WTC11 (cell line): ENCODE measurements at regions of chr12 and their contacts with region 1.

Region 1: GRCh38 chr12:57462251-57462911 is 2.8 kb downstream of the GLI1 start:
- DNase-seq: peak; percentile 96
- ATAC-seq: peak; percentile 59
- H3K4me3 Mint-ChIP-seq: peak overlapping the region; percentile 96
- H3K27ac Mint-ChIP-seq: peak overlapping the region; percentile 100
- H3K4me1 Mint-ChIP-seq: peaks cover 25% of the 10 kb centered on the region
- H3K27me3 Mint-ChIP-seq: peaks cover 9% of the 10 kb centered on the region
- CTCF ChIP-seq: peak; percentile 81

Region 2: DNA sequence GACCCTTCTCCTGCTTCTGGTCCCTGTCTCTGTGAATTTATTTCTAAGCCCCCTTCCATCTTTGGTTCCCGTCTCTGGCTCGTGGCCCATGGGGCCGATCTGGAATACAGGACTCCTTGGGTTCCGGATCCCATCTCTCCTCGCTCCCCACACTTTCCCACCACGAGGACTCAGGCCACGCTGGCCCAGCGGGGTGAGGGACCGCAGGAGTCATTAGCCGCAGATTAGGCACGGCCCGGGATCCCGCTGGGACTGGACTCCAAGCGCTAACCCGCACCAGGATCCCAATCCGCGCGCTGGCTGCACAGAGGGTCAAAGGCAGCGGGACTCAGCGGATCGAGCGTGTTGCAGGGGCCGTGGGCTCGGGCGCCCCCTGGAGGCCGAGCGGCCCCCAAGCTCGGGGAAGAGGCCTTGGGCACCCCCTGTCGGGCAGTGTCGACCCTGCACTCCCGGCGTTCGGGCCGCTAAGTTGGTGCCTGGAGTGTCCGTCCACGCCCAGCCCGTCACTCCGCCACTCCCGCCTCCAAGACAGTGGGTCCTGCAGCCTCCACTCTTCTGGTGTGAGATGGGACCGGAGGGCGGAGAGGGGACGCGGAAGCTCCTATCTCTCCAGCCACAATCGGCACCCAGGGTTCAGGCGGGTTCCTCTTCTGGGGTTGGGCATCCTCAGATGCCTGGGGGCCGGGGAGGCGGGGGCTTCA is 223.4 kb before region 1 on chr12:
- CTCF ChIA-PET with region 1: interaction called, 34 read pairs
- POLR2A ChIA-PET with region 1: interaction called, 5 read pairs
- DNase-seq: peak; percentile 90
- ATAC-seq: peak; percentile 10
- H3K4me3 Mint-ChIP-seq: peak overlapping the region; percentile 84
- H3K27ac Mint-ChIP-seq: no peak overlapping the region; the same call in 1 of the 2 replicates
- H3K4me1 Mint-ChIP-seq: peaks cover 66% of the 10 kb centered on the region
- H3K27me3 Mint-ChIP-seq: peaks cover 89% of the 10 kb centered on the region
- CTCF ChIP-seq: peak; percentile 100

Region 3: DNA sequence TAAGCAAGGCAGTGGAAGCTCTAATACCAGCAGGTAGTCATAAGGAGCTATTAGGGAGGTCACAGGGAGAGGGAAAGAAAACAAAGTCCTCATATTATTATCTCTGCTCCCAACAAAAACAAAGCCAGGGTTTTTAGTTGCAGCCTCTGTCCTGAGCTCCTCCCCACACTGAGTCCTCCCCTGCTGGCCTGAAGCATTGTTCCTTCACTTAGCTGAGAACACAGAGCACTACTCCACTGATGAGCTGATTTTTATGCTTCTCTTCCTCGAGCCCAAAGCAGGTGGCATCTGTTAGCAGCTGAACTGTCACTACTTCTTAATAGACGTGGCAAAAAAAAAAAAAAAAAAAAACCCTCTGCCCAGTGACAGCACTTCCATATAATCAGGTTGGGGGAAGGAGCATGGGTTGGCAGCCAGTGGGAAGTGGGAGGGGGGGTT is 200.9 kb before region 1 on chr12:
- CTCF ChIA-PET with region 1: interaction called, 15 read pairs
- POLR2A ChIA-PET with region 1: no interaction called
- DNase-seq: no peak
- ATAC-seq: peak; percentile 73
- H3K4me3 Mint-ChIP-seq: no peak overlapping the region
- H3K27ac Mint-ChIP-seq: no peak overlapping the region
- H3K4me1 Mint-ChIP-seq: peaks cover 12% of the 10 kb centered on the region
- H3K27me3 Mint-ChIP-seq: no peaks in the 10 kb centered on the region
- CTCF ChIP-seq: no peak

Region 4: GRCh38 chr12:57299514-57300016 is 162.8 kb before region 1 on chr12:
- CTCF ChIA-PET with region 1: interaction called, 18 read pairs
- POLR2A ChIA-PET with region 1: interaction called, 3 read pairs
- DNase-seq: no peak
- ATAC-seq: peak; percentile 62; the same call in 1 of the 2 replicates
- H3K4me3 Mint-ChIP-seq: no peak overlapping the region
- H3K27ac Mint-ChIP-seq: peak overlapping the region; percentile 32
- H3K4me1 Mint-ChIP-seq: peaks cover 15% of the 10 kb centered on the region
- H3K27me3 Mint-ChIP-seq: no peaks in the 10 kb centered on the region
- CTCF ChIP-seq: no peak

Region 5: GRCh38 chr12:57340104-57340503 is 122.3 kb before region 1 on chr12:
- CTCF ChIA-PET with region 1: interaction called, 25 read pairs
- POLR2A ChIA-PET with region 1: no interaction called
- DNase-seq: no peak
- ATAC-seq: no peak
- H3K4me3 Mint-ChIP-seq: no peak overlapping the region
- H3K27ac Mint-ChIP-seq: no peak overlapping the region
- H3K4me1 Mint-ChIP-seq: peaks cover 25% of the 10 kb centered on the region
- H3K27me3 Mint-ChIP-seq: no peaks in the 10 kb centered on the region
- CTCF ChIP-seq: no peak

Region 6: DNA sequence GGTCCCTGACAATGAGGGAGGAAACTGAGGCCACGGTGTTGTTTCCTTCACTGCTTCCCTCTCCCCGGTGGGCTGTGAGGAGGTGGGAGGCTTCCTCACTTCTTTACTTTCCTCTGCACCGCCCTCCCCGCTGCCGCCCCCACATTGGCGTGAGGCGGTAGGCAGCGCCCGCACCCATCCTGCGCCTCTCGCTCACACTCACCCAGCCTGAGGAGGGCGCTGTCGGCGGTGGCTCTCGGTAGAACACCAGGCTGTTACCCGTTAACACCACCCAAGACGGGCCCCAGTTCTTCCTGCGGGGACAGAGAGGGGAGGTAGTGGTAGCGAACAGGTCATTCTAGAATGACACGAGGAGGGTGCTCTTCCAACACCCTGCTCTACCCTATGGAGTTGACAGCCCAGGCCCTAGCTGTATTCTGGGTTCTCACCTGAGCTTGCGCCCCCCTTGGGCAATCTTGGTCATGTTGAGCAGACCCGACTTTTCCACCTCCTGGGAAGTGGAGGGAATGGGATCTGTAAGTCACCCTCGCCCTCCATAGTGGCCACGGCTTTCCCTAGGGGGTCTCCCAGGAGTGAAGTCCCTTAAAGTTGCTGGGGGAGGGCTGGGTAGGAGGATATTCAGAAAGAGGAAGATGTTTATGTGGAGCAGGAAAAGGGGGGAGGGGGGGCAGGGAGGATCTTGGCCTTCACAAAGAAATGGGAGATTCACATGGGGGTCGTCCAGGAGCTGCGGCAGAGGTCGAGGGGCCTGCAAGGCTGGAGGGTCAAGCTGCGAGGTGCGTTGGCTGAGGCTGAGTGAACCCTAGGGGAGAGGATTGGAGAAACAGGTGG is 14.0 kb after region 1 on chr12:
- CTCF ChIA-PET with region 1: interaction called, 88 read pairs
- POLR2A ChIA-PET with region 1: interaction called, 6 read pairs
- DNase-seq: peak; percentile 68
- ATAC-seq: peak; percentile 44
- H3K4me3 Mint-ChIP-seq: peak overlapping the region; percentile 77
- H3K27ac Mint-ChIP-seq: no peak overlapping the region
- H3K4me1 Mint-ChIP-seq: peaks cover 35% of the 10 kb centered on the region
- H3K27me3 Mint-ChIP-seq: peaks cover 99% of the 10 kb centered on the region
- CTCF ChIP-seq: peak; percentile 63

Region 7: DNA sequence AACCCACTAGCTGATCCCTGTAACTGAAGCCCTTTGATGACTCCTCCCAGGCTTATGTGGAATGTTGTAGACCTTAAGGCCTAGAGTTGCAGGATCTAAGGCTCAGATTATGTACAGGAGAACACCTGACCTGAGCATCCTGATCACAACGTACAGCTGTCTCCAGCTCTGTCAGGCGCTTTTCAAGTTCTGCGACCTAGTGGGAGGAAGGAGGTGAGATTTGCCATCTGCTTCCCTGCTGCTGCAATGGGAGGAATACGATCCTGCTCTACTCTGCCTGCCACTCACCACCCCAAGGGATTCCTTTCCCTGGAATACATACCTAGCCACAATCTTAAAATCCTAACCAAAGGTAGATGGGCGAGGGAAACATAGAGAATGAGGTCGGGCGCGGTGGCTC is 70.7 kb after region 1 on chr12:
- CTCF ChIA-PET with region 1: no interaction called
- POLR2A ChIA-PET with region 1: no interaction called
- DNase-seq: no peak
- ATAC-seq: no peak
- H3K4me3 Mint-ChIP-seq: no peak overlapping the region
- H3K27ac Mint-ChIP-seq: no peak overlapping the region
- H3K4me1 Mint-ChIP-seq: peaks cover 9% of the 10 kb centered on the region
- H3K27me3 Mint-ChIP-seq: no peaks in the 10 kb centered on the region
- CTCF ChIP-seq: no peak

Region 8: DNA sequence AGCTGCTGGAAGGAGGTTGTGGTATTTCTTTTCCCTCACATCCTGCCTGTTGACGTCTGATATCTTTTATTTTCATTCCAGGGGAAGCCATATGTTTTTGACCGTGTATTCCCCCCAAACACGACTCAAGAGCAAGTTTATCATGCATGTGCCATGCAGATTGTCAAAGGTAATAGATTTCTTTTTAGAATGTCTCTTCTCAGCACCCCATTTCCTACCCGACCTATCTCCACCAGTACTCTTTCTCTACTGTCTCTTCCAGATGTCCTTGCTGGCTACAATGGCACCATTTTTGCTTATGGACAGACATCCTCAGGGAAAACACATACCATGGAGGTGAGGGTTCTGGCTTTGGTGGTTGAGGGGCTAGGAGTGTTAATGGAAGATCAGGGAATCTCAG is 101.0 kb after region 1 on chr12:
- CTCF ChIA-PET with region 1: no interaction called
- POLR2A ChIA-PET with region 1: no interaction called
- DNase-seq: no peak
- ATAC-seq: no peak
- H3K4me3 Mint-ChIP-seq: no peak overlapping the region
- H3K27ac Mint-ChIP-seq: no peak overlapping the region
- H3K4me1 Mint-ChIP-seq: no peaks in the 10 kb centered on the region
- H3K27me3 Mint-ChIP-seq: no peaks in the 10 kb centered on the region
- CTCF ChIP-seq: no peak

Region 9: DNA sequence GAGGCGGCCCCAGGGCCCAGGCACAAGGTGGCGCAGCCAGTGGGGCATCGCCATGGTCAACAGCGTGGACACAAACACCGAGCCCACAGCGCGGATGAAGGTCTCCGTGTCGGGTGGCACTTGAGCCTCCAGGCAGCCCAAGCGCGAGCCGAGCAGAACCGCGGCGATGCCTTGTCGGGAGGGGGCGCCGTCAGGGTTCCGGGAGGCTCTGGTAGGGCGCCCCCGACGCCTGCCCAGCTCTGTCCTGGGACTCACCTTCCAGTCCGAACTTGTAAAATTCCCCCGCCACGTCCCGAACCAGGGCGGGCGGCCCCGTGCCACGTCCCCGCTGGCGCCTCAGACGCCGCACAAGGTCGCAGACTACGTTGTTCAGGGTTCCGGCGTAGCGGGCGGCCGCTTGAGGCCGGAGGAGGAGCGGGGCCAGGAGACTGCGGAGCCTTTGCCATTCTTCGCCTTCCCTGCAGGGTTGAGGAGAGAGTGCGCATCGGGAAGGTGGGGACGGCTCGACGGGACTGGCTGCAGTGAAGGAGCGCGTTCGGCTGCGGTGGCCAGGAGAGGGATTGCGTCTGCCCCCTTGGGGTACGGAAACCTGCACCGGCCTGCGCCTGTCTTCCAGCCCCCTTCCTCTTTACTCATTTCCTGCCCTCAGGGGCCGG is 302.8 kb after region 1 on chr12:
- CTCF ChIA-PET with region 1: no interaction called
- POLR2A ChIA-PET with region 1: no interaction called
- DNase-seq: peak; percentile 71
- ATAC-seq: peak; percentile 69
- H3K4me3 Mint-ChIP-seq: peak overlapping the region; percentile 74
- H3K27ac Mint-ChIP-seq: no peak overlapping the region
- H3K4me1 Mint-ChIP-seq: peaks cover 33% of the 10 kb centered on the region
- H3K27me3 Mint-ChIP-seq: peaks cover 81% of the 10 kb centered on the region
- CTCF ChIP-seq: no peak